CD8-positive, alpha-beta T cell (primary cell): ENCODE measurements at regions of chr16 and their contacts with region 1.

Region 1: GRCh38 chr16:87636072-87636684 is 33.9 kb downstream of the JPH3 start:
- DNase-seq: peak; percentile 63 to 90 (median 83)
- ATAC-seq: peak; percentile 85
- H3K4me3 ChIP-seq: peak overlapping the region; percentile 54 to 64
- H3K4me3 Mint-ChIP-seq: peak overlapping the region; percentile 87
- H3K27ac ChIP-seq: peak overlapping the region; percentile 47 to 49
- H3K27ac Mint-ChIP-seq: peak overlapping the region; percentile 93
- H3K4me1 ChIP-seq: peaks cover 17% of the 10 kb centered on the region
- H3K4me1 Mint-ChIP-seq: peaks cover 15% of the 10 kb centered on the region
- H3K27me3 ChIP-seq: peaks cover 0 to 2% of the 10 kb centered on the region in 2 experiments
- H3K27me3 Mint-ChIP-seq: no peaks in the 10 kb centered on the region
- CTCF ChIP-seq: peak; percentile 65

Region 2: DNA sequence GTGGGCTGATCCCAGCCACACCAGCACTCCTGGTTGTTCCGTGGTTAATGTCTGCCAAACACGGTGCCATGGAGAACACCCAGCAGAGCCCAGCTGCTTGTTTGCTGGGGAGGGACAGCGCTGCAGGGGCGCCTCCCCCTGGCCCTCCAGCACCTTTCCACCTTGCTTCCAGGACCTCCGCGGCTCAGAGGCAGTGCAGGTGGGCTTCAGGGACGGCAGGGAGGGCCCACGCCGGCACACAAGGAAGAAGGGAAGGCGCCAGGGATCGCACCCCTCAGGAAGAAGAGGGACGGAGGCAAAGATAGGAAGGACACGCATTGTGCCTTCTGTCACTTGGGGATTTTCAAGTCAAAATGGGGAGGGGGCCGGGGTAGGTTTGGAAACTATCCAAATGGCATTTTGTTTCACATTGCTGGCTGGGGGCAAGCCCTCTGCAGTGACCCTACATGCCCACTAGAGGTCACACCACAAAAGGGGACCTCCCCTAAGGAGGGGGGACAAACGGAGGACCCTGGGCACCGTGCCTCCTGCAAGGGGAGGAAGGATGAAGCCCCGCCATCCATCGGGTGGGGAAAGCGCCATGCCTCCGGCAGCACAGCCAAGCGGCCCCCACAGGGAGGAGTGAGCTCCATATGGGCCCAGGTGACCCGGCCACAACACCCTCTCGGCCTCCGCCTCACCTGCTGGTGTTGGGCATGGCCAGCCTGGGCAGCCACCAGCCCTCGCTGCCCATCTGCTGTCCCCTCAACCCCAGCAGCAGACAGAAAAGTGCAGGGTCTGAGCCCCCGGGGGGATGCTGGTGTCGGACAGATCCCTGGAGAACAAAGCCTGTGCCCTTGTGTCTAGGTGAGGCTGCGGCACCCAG is 311.5 kb before region 1 on chr16:
- CTCF ChIA-PET with region 1: interaction called, 17 read pairs
- POLR2A ChIA-PET with region 1: no interaction called
- intact Hi-C with region 1: loop called in 1 of 2 experiments (anchors 1 kb)
- DNase-seq: peak in 8 of 9 experiments; percentile 17 to 67 (median 56)
- ATAC-seq: peak; percentile 95
- H3K4me3 ChIP-seq: no peak overlapping the region
- H3K4me3 Mint-ChIP-seq: no peak overlapping the region
- H3K27ac ChIP-seq: no peak overlapping the region
- H3K27ac Mint-ChIP-seq: no peak overlapping the region
- H3K4me1 ChIP-seq: peaks cover 3% of the 10 kb centered on the region
- H3K4me1 Mint-ChIP-seq: peaks cover 7% of the 10 kb centered on the region
- H3K27me3 ChIP-seq: no peaks in the 10 kb centered on the region
- H3K27me3 Mint-ChIP-seq: no peaks in the 10 kb centered on the region
- CTCF ChIP-seq: peak; percentile 80

Region 3: DNA sequence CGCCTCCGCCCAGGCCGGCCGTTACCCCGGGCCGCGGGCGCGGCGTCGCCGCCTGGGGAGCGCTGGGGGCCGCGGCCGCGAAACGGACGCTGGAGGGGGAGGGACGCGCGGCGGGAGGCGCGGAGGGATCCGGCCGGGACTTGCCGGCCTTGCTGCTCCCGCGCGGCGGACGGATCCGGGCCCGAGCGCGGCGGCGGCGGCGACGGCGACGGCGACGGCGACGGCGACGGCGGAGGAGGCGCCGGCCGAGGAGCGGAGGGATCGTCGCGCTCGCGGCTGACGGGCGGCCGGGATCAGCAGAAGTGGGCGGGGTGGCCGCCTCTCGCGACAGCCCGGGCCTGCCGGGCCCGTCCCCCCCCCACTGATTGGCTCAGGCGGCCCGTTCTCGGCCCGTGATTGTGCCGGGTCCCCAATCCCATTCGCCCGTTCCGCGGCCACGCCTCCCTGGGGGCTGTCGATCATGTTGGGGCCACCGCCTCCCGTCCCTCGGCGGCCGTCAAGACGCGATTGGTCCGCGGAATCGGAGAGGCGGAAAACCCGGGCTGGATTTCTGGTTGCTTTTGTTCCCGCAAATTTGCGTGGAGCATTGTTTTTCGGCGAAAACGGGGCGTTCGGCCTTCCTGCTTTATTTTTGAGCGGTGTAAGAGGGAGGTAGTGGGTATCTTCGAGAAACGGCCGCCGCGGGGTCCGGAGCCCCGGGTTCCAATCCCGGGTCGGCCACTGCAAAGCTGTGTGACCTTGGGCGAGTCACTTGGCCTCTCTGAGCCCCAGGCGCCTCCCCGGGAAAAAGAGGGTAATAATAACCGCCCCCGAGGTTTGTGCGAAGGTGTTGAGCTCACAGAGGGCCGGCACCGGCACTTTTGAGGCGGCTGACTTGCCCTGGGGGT is 143.2 kb before region 1 on chr16 and contains the start of gene ZCCHC14:
- CTCF ChIA-PET with region 1: interaction called, 6 read pairs
- POLR2A ChIA-PET with region 1: no interaction called
- intact Hi-C with region 1: loop called in 1 of 2 experiments (anchors 2 kb)
- DNase-seq: peak; percentile 97 to 99 (median 99)
- ATAC-seq: peak; percentile 92
- H3K4me3 ChIP-seq: peak within 1 kb of the TSS; percentile 70 to 71
- H3K4me3 Mint-ChIP-seq: peak within 1 kb of the TSS; percentile 89
- H3K27ac ChIP-seq: peak within 1 kb of the TSS; percentile 30 to 48
- H3K27ac Mint-ChIP-seq: peak within 1 kb of the TSS; percentile 82
- H3K4me1 ChIP-seq: peaks cover 41% of the 10 kb centered on the region
- H3K4me1 Mint-ChIP-seq: peaks cover 52% of the 10 kb centered on the region
- H3K27me3 ChIP-seq: no peaks in the 10 kb centered on the region
- H3K27me3 Mint-ChIP-seq: no peaks in the 10 kb centered on the region
- CTCF ChIP-seq: no peak
- total RNA-seq, gene ZCCHC14: 13.2 TPM

Region 4: DNA sequence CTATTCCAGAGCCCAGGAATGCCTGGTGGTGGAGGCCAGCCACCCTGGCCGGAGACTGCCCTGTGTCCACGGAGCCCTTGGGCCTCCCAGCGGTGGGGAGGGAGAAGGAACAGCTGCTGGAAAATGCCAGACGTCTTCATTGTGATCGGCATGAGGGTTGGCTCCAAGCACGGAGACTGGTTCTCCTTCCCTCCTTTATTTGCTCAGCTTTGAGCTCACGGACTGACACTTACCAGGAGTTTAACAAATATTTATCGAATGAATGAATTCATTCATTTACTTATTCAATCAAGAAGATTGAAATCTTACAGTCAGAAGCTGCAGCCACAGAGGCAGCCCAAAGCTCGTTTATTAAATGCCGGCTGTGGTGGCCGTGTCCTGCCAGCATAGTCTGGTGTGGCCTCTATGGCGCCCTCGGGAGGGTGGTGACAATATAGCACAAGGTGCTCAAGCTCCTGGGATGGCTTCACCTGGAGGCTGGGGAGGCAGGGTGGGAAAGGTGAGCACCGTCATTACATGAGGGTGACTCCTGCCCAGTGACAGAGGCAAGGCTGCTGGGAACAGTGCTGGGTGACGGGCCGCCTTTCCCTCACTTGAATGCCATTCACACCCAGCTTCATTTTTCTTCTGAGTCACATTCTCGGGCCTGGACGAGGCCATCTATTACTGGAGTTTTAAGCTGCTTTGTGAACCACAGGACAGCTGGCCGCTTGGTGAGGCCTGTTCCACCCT is 64.9 kb before region 1 on chr16:
- CTCF ChIA-PET with region 1: interaction called, 20 read pairs
- POLR2A ChIA-PET with region 1: no interaction called
- intact Hi-C with region 1: no loop called
- DNase-seq: no peak
- ATAC-seq: no peak
- H3K4me3 ChIP-seq: no peak overlapping the region
- H3K4me3 Mint-ChIP-seq: no peak overlapping the region
- H3K27ac ChIP-seq: no peak overlapping the region
- H3K27ac Mint-ChIP-seq: no peak overlapping the region
- H3K4me1 ChIP-seq: no peaks in the 10 kb centered on the region
- H3K4me1 Mint-ChIP-seq: no peaks in the 10 kb centered on the region
- H3K27me3 ChIP-seq: no peaks in the 10 kb centered on the region
- H3K27me3 Mint-ChIP-seq: peaks cover 11% of the 10 kb centered on the region
- CTCF ChIP-seq: no peak

Region 5: GRCh38 chr16:87621976-87622713 is 14.0 kb before region 1 on chr16:
- CTCF ChIA-PET with region 1: interaction called, 32 read pairs
- POLR2A ChIA-PET with region 1: no interaction called
- intact Hi-C with region 1: no loop called
- DNase-seq: no peak
- ATAC-seq: no peak
- H3K4me3 ChIP-seq: no peak overlapping the region
- H3K4me3 Mint-ChIP-seq: no peak overlapping the region
- H3K27ac ChIP-seq: no peak overlapping the region
- H3K27ac Mint-ChIP-seq: no peak overlapping the region
- H3K4me1 ChIP-seq: no peaks in the 10 kb centered on the region
- H3K4me1 Mint-ChIP-seq: no peaks in the 10 kb centered on the region
- H3K27me3 ChIP-seq: peaks cover 0 to 6% of the 10 kb centered on the region in 2 experiments
- H3K27me3 Mint-ChIP-seq: peaks cover 4% of the 10 kb centered on the region
- CTCF ChIP-seq: no peak

Region 6: GRCh38 chr16:87703835-87704375 is 67.7 kb after region 1 on chr16:
- CTCF ChIA-PET with region 1: no interaction called
- POLR2A ChIA-PET with region 1: no interaction called
- intact Hi-C with region 1: no loop called
- DNase-seq: no peak
- ATAC-seq: no peak
- H3K4me3 ChIP-seq: no peak overlapping the region
- H3K4me3 Mint-ChIP-seq: no peak overlapping the region
- H3K27ac ChIP-seq: no peak overlapping the region
- H3K27ac Mint-ChIP-seq: no peak overlapping the region
- H3K4me1 ChIP-seq: peaks cover 35% of the 10 kb centered on the region
- H3K4me1 Mint-ChIP-seq: peaks cover 35% of the 10 kb centered on the region
- H3K27me3 ChIP-seq: no peaks in the 10 kb centered on the region
- H3K27me3 Mint-ChIP-seq: no peaks in the 10 kb centered on the region
- CTCF ChIP-seq: no peak